Activated naive CD4-positive, alpha-beta T cell treated with anti-CD3 and anti-CD28 coated beads for 36 hours (primary cell): ENCODE measurements at regions of chr1 and their contacts with region 1.

Region 1: DNA sequence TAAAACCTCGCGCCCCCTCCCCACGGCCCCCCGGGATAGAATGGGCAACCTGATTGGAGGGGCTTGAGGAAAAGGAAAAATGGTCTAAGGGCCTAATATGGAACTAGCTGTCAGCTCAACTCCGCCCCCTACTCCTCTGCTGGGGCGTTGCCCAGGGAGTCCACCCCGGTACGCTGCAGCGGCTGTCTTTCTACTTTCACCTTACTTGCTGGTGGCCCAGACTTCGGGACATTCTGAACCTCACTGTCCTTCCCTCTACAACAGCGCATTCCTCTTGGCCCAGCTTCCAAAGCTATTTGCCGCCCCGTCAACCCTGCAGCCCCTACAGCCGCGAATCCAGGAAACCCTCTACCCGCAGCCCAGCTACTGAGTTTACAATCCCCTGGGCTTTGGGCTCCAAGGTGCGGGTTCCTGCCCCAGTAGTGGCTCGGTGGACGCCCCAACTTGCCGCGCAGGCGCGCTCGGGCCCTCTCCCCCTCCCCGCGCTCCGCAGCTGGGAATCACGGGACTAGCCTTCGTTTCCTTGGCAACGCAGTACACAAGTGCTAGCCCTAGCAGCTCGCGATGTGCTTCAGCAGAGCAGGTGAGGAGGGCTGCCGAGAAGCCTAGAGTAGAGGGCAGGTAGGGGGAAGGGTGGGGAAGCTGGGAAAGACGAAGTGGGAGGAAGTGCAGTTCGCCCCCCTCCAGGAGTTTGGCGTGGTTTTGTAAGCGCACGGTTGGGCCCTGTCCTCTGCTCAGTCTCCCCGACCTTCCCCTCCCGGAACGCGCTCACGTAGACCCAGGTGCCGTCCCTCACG is 55.6 kb downstream of the CHIA start:
- DNase-seq: peak; percentile 86
- H3K4me3 Mint-ChIP-seq: peak overlapping the region; percentile 90
- H3K27ac Mint-ChIP-seq: peak overlapping the region; percentile 64
- H3K4me1 Mint-ChIP-seq: peaks cover 12% of the 10 kb centered on the region
- H3K27me3 Mint-ChIP-seq: no peaks in the 10 kb centered on the region

Region 2: DNA sequence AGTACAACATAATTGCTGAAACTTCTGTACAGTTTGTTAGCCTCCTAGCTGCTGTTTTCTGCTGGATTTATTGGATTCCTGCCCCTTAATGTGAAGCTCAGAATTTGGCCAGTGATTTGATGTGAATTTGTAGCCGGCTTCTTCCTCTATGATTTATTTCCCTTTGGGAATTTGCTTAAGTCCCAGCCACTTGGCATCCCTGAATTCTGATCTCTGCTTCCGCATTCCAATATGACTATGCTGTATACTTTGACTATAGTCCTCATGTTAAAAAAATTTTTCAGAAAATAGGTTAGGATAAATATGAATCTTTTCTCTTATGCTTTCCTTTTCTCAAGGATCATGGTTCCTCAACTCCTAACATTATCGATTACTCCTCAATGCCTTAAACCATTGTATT is 370.2 kb before region 1 on chr1:
- CTCF ChIA-PET with region 1: no interaction called
- intact Hi-C with region 1: no loop called
- DNase-seq: no peak
- H3K4me3 Mint-ChIP-seq: no peak overlapping the region
- H3K27ac Mint-ChIP-seq: no peak overlapping the region
- H3K4me1 Mint-ChIP-seq: no peaks in the 10 kb centered on the region
- H3K27me3 Mint-ChIP-seq: peaks cover 15% of the 10 kb centered on the region

Region 3: DNA sequence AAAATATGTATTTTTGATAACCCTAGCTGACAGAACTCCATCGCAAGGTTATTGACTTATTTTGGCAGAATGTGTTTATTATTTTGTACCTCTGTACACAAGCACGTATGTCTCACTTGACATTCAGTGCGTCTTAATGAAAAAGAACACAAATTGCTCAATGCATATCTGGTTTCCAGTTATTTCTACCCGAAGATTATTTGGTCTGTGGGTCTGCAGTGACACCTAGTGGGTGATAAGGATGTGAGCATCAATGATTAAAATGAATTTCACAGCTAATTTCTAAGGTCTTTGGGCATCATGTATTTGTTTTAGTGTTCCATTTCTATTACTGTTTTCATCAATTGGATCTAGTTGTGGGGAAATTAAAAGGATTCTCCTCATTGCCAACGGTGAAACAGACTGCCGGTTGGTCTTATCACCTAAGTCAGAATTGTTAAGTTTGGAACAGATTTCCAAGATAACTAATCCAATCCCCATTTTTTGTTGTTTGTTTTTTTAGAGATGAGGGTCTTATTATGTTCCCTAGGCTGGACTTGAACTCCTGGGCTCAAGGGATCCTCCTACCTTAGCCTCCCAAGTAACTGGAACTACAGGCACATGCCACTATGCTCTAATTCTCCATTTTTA is 423.3 kb after region 1 on chr1:
- CTCF ChIA-PET with region 1: no interaction called
- intact Hi-C with region 1: loop called (anchors 10 kb)
- DNase-seq: peak; percentile 67
- H3K4me3 Mint-ChIP-seq: no peak overlapping the region
- H3K27ac Mint-ChIP-seq: no peak overlapping the region
- H3K4me1 Mint-ChIP-seq: peaks cover 12% of the 10 kb centered on the region
- H3K27me3 Mint-ChIP-seq: no peaks in the 10 kb centered on the region